Esophagus muscularis mucosa (tissue), 4 donors: ENCODE measurements at regions of chr2 and their contacts with region 1.

Region 1: GRCh38 chr2:207334624-207335371 is 169.1 kb upstream of the KLF7 start:
- DNase-seq: no peak
- H3K4me3 ChIP-seq: peak overlapping the region; percentile 22 to 47 (median 38)
- H3K27ac ChIP-seq: peak overlapping the region; percentile 77 to 87 (median 82)
- H3K4me1 ChIP-seq: peaks cover 20 to 34% (median 25%) of the 10 kb centered on the region in 4 donors
- H3K27me3 ChIP-seq: no peaks in the 10 kb centered on the region
- CTCF ChIP-seq: no peak
- EP300 ChIP-seq: peak; percentile 85
- POLR2A ChIP-seq: no peak

Region 2: DNA sequence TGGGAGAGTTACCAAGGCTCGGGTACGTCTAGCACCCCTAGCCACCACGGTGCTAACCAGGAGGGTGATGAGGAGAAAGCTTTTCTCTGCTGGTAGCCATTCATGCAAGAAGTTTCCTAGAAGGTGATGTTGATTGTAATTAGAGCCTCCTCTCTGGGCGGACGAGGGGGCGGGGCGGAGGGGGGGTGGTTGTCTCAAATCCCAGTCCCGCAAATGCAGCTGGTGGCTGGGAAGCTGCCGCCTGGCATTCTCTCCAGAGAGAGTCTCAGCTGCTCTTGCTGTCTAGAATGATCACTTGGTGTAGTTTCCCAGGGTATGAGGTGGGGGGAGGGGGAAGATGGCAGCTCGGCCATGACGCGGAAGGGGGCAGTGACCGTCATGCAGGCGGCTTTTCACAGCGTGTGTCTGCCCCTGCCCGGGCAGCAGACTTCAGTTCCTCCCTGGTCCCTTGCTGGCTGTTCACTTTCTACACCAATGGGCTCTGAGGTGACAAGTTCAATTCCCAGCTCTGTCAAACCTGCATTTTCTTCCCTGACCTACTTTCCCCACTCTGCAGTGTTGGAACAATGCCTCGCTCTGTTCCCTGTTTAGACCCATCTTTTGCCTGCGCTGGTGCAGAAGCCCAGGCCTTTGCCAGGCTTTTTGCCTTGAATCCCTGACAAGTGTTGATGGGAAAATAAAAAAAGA is 107.6 kb before region 1 on chr2:
- intact Hi-C with region 1: loop called (anchors 5 kb)
- DNase-seq: peak; percentile 87
- H3K4me3 ChIP-seq: peak overlapping the region; percentile 30 to 48 (median 37)
- H3K27ac ChIP-seq: peak overlapping the region; percentile 70 to 83 (median 76)
- H3K4me1 ChIP-seq: peaks cover 45 to 62% (median 49%) of the 10 kb centered on the region in 4 donors
- H3K27me3 ChIP-seq: no peaks in the 10 kb centered on the region
- CTCF ChIP-seq: no peak
- EP300 ChIP-seq: no peak
- POLR2A ChIP-seq: no peak

Region 3: DNA sequence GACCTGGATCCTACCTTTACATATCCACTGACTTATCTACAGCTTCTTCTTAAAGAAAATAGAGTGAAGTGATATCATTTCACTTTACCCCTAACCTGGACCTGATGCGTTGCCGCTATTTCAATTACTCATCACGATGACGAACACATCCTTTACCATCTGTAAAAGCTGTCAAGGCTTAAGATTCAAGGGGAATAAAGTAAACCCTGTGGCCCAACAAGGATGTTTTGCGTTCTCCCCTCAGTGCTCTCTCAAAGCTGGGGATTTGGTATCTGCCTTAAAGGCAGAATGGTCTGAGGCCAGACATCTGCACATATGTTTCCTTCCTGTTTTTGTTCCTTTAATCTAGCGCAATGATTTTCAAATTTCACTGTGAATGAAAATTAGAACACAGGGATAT is 68.9 kb before region 1 on chr2:
- intact Hi-C with region 1: loop called (anchors 10 kb)
- DNase-seq: no peak
- H3K4me3 ChIP-seq: no peak overlapping the region
- H3K27ac ChIP-seq: no peak overlapping the region
- H3K4me1 ChIP-seq: peaks cover 0 to 30% (median 16%) of the 10 kb centered on the region in 4 donors
- H3K27me3 ChIP-seq: no peaks in the 10 kb centered on the region
- CTCF ChIP-seq: no peak
- EP300 ChIP-seq: no peak
- POLR2A ChIP-seq: no peak

Region 4: GRCh38 chr2:207499114-207499513 is 164.3 kb after region 1 on chr2:
- intact Hi-C with region 1: no loop called
- DNase-seq: no peak
- H3K4me3 ChIP-seq: no peak overlapping the region
- H3K27ac ChIP-seq: no peak overlapping the region
- H3K4me1 ChIP-seq: peaks cover 21 to 39% (median 30%) of the 10 kb centered on the region in 4 donors
- H3K27me3 ChIP-seq: no peaks in the 10 kb centered on the region
- CTCF ChIP-seq: no peak
- EP300 ChIP-seq: no peak
- POLR2A ChIP-seq: no peak